ENCODE measurements at regions of chr13 and their contacts with region 1.

Region 1: DNA sequence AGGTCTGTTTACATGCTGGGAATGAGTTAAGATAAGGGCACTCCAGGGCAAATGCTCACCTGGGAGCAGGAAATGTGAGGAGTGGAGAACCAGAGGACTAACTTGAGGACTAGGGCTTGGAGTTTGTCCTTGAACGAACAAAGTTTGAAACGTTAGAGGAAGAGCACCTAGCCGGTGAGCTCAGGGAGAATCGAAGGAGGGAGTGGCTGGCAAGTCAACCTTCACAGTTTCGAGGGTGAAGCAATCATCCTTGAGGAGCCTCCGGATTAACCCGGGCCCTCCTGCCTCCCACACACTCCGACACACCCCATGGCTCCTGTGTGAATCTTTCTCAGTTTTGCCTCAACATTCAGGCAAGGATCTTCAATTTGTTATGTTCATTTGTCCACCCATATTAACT is 58.6 kb downstream of the LMO7 start:
- DNase-seq: no peak
- H3K4me3 ChIP-seq: no peak overlapping the region
- CTCF ChIP-seq: no peak

Region 2: DNA sequence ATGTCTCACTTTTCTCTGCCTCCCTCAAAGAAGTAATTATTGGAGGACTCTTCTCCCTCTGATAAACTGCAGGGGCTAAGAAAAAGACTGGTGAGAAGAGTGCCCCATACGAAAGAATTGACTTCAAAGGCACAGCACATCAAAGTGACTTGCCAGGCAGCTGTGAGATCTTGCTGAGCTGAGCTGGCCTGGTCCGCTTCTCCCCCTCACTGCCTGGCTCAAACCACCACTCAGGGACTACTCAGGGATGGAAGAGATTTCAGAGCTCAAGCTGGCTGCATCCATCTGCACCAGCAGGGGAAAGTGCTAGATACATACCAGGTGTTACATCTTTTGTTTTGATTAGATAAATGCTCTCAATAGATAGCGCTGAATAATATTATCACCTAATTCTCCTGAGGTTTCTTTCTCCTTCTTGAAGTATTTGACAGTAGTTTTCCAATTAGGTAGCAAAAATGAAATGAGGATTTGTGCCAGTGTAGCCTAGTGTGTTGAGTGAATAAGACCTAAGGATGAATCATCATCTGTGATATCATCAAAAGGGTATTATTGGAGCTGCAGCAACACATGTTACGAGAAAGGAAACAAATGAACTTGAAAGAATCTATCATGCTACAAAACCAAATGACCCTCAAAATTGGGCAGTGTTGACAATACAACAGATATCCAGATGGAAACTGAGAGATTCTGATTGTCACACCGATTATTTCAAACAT is 592.6 kb before region 1 on chr13:
- CTCF ChIA-PET with region 1: no interaction called
- POLR2A ChIA-PET with region 1: no interaction called
- DNase-seq: no peak
- H3K4me3 ChIP-seq: no peak overlapping the region
- CTCF ChIP-seq: no peak

Region 3: DNA sequence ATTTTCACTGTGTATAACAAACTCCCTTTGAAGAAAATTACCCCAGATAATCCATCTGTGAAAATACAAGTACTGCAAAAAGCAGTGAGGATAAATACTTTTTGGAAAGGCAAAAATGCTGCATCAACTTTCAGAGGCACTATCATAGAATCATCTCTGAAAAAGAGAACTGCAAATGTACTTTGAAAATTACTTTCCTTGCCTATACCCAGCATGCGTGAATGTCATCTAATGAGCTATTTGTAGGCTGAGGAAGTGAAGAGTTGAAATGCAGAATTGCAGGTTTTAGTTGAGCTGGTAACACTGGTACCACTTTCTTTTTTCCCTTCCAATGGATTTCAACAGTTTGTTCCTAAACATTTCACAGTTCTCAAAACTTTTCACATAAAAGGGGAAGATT is 409.4 kb before region 1 on chr13:
- CTCF ChIA-PET with region 1: no interaction called
- POLR2A ChIA-PET with region 1: no interaction called
- DNase-seq: no peak
- H3K4me3 ChIP-seq: no peak overlapping the region
- CTCF ChIP-seq: no peak

Region 4: GRCh38 chr13:75512253-75512652 is 182.5 kb before region 1 on chr13:
- CTCF ChIA-PET with region 1: no interaction called
- POLR2A ChIA-PET with region 1: no interaction called
- DNase-seq: no peak
- H3K4me3 ChIP-seq: no peak overlapping the region
- CTCF ChIP-seq: no peak

Region 5: GRCh38 chr13:75675421-75675820 is 19.3 kb before region 1 on chr13:
- CTCF ChIA-PET with region 1: interaction called, 77 read pairs
- POLR2A ChIA-PET with region 1: no interaction called
- DNase-seq: no peak
- H3K4me3 ChIP-seq: no peak overlapping the region
- CTCF ChIP-seq: no peak

Region 6: GRCh38 chr13:75715601-75716523 is 21.1 kb after region 1 on chr13:
- CTCF ChIA-PET with region 1: interaction called, 51 read pairs
- POLR2A ChIA-PET with region 1: no interaction called
- DNase-seq: no peak
- H3K4me3 ChIP-seq: no peak overlapping the region
- CTCF ChIP-seq: no peak

Region 7: DNA sequence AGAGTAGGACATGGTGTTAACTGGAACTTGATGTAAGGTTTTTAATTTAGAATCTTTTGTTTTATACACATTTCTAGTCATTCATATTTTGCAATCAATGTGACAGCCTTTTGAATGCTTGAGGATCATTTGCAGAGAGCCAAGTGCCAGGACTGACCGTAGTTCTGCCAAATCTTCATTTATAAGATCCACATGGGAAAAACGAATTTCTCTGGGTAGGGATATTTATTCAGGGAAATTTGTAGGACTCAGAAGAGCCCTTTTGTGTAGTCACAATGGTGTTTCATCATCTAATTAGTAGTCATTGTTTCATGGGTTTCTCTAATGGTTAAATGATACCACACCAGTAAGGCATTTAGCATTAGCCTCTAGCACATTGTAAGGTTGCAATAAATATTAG is 102.5 kb after region 1 on chr13:
- CTCF ChIA-PET with region 1: interaction called, 13 read pairs
- POLR2A ChIA-PET with region 1: no interaction called
- DNase-seq: no peak
- H3K4me3 ChIP-seq: no peak overlapping the region
- CTCF ChIP-seq: no peak

Region 8: GRCh38 chr13:75841905-75842304 is 147.2 kb after region 1 on chr13:
- CTCF ChIA-PET with region 1: interaction called, 30 read pairs
- POLR2A ChIA-PET with region 1: no interaction called
- DNase-seq: no peak
- H3K4me3 ChIP-seq: no peak overlapping the region
- CTCF ChIP-seq: no peak

Region 9: GRCh38 chr13:75870397-75870903 is 175.7 kb after region 1 on chr13:
- CTCF ChIA-PET with region 1: interaction called, 30 read pairs
- POLR2A ChIA-PET with region 1: no interaction called
- DNase-seq: no peak
- H3K4me3 ChIP-seq: peak overlapping the region; percentile 6; the same call in 1 of the 2 replicates
- CTCF ChIP-seq: peak; percentile 36